Spleen (tissue), 13 donors: ENCODE measurements at regions of chr11 and their contacts with region 1.

Region 1: DNA sequence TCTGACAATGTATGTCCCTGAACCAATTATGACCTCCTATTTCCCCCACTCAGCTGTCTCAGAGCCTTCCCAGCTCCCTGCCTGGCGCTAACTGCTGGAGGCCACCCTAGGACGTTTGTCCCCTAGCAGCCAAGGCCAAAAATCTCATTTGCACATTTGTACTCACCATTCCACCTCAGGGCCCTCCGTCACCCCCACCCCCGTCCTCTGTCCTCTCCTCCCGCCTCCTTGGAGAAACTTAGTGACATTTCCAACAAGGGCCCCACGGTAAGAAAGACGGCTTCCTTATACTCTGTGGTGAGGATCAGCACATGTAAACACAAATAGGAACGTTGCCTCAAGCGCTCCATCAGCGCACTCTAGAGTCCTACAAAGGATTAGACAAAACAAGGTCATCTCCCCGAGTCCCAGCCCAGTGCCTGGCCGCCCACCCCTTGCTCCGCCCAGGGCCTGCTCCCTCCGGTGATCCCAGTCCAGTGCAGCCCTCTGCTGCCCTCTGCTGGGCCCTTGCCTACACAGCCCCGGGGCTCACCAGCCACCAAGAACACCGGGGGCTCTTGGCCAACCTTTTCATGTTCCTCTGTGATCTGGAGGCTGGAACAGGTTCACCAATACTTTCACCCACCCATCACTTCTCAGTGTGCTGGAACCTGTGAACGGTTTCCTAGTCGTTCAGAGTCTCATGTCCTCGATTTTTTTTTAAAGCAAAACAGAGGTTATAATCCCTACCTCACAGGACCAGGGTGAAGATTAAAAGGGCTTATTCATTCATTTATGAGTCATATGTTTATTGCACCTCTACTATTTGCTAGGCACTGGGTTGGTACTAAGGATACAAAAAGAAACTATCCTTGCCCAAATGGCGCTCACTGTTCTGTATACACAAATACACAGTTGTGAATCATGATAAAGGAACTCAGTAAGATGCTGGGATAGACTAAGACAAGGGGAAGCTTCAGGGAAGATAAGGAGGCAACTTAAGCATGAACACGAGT is 15.3 kb upstream of the CTR9 start:
- DNase-seq: peak; percentile 99
- H3K4me3 ChIP-seq: peak overlapping the region in 4 of 8 donors; percentile 3 to 46 (median 14)
- H3K27ac ChIP-seq: peak overlapping the region; percentile 28 to 80 (median 72)
- H3K4me1 ChIP-seq: peaks cover 0 to 16% (median 12%) of the 10 kb centered on the region in 6 donors
- H3K27me3 ChIP-seq: no peaks in the 10 kb centered on the region
- CTCF ChIP-seq: peak; percentile 96 to 99 (median 99)
- POLR2A ChIP-seq: no peak

Region 2: GRCh38 chr11:10413268-10413667 is 322.5 kb before region 1 on chr11:
- intact Hi-C with region 1: loop called (anchors 2 kb)
- DNase-seq: peak; percentile 81
- H3K4me3 ChIP-seq: no peak overlapping the region
- H3K27ac ChIP-seq: peak overlapping the region in 1 of 8 donors; percentile 70
- H3K4me1 ChIP-seq: peaks cover 10 to 41% (median 23%) of the 10 kb centered on the region in 6 donors
- H3K27me3 ChIP-seq: no peaks in the 10 kb centered on the region
- CTCF ChIP-seq: peak in 9 of 11 experiments; percentile 31 to 59 (median 48)
- POLR2A ChIP-seq: no peak

Region 3: DNA sequence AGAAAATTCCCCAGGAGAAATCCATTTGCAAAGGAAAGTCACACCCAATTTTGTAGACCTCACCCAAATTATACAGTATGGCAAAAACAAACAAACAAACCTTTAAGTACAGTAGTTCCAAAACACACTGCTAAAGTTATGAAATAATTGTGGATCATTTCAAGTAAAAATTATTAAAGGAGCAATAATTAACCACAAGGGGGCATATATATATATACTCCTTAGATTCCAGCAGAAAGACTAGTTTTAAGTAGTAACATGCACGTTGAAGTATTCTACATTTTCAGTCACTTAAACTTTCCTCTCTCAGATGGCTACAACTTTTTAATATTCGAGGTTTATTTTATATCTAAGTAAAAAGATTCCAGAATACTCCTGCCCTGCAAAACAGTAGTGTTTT is 221.6 kb before region 1 on chr11:
- intact Hi-C with region 1: loop called (anchors 5 kb)
- DNase-seq: no peak
- H3K4me3 ChIP-seq: no peak overlapping the region
- H3K27ac ChIP-seq: peak overlapping the region in 2 of 8 donors; percentile 10 to 24
- H3K4me1 ChIP-seq: peaks cover 0 to 22% (median 0%) of the 10 kb centered on the region in 6 donors
- H3K27me3 ChIP-seq: no peaks in the 10 kb centered on the region
- CTCF ChIP-seq: peak in 7 of 11 experiments; percentile 14 to 55 (median 41)
- POLR2A ChIP-seq: no peak